HEK293T (cell line): ENCODE measurements at regions of chr9 and their contacts with region 1.

Region 1: GRCh38 chr9:5529683-5530221 is 19.4 kb downstream of the PDCD1LG2 start:
- DNase-seq: no peak

Region 2: DNA sequence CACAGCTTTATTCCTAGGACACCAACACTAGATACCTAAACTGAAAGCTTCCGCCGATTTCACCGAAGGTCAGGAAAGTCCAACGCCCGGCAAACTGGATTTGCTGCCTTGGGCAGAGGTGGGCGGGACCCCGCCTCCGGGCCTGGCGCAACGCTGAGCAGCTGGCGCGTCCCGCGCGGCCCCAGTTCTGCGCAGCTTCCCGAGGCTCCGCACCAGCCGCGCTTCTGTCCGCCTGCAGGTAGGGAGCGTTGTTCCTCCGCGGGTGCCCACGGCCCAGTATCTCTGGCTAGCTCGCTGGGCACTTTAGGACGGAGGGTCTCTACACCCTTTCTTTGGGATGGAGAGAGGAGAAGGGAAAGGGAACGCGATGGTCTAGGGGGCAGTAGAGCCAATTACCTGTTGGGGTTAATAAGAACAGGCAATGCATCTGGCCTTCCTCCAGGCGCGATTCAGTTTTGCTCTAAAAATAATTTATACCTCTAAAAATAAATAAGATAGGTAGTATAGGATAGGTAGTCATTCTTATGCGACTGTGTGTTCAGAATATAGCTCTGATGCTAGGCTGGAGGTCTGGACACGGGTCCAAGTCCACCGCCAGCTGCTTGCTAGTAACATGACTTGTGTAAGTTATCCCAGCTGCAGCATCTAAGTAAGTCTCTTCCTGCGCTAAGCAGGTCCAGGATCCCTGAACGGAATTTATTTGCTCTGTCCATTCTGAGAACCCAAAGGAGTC is 79.2 kb before region 1 on chr9 and contains the start of gene CD274:
- CTCF ChIA-PET with region 1: no interaction called
- POLR2A ChIA-PET with region 1: no interaction called
- DNase-seq: peak; percentile 63

Region 3: DNA sequence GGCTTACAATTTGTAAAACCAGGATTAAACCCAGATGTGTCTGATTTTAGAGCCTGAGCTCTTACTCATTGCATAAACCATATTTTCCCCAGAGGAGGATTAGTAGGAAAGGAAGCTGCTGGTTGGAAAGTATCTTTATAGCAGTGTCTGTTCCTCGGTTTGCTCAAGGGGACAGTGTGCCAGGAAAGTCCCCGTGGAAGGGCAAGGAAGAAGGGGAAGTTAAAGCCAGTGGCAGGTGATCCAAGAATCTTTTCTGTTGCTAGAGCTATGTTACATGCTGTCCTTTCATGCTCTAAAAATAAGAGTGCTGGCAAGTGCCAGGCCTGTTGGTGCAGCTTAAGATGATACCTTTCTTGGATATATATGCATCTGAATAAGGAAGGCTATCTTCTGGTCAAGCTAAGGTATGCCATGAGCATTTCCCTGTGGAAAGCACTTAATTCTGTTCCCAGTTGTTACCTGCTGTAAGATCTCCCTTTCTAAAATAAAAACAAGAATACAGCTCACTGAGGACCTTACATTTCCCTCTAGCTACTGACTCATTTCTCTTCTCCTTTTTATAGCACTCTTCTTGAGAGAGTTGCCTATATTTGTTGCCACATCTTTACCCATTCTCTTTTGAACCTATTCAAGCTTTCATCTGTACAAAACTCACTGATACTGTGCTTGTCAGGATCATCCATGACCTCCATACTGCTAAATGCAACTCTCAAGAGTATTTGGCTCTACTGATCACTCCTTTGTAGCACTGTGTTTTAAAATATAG is 11.4 kb before region 1 on chr9:
- CTCF ChIA-PET with region 1: interaction called, 13 read pairs
- POLR2A ChIA-PET with region 1: no interaction called
- DNase-seq: no peak